Mammary epithelial cell (primary cell): ENCODE measurements at regions of chr3 and their contacts with region 1.

Region 1: DNA sequence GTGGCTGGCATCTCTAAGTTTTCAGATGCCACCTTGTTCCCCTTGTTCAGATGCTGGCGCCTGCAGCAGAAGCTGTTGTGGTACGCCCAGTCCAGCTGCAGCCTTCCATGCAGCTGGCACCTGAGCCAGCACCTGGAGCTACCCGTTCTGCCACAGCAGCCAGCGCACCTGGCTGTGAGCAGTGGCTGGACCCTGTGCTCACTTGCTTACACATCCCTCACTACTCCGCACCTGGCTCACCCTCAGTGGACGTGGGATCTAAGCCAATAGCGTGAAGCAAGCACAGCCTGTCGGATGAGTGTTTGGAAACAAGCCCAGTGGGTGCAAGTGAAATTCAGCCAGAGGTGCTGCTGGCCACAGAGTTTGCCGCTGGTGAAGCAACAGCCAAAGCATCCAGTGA is 607.5 kb upstream of the BCHE start:
- DNase-seq: peak; percentile 94
- H3K4me3 ChIP-seq: peak overlapping the region in 2 of 3 experiments; percentile 6 to 8
- H3K27ac ChIP-seq: peak overlapping the region; percentile 62
- H3K4me1 ChIP-seq: peaks cover 34% of the 10 kb centered on the region
- H3K27me3 ChIP-seq: no peaks in the 10 kb centered on the region
- CTCF ChIP-seq: no peak

Region 2: GRCh38 chr3:166085164-166085821 is 359.5 kb before region 1 on chr3:
- CTCF ChIA-PET with region 1: no interaction called
- dilution Hi-C with region 1: no loop called
- in situ Hi-C with region 1: no loop called
- intact Hi-C with region 1: loop called (anchors 10 kb)
- DNase-seq: peak; percentile 81
- H3K4me3 ChIP-seq: no peak overlapping the region
- H3K27ac ChIP-seq: no peak overlapping the region
- H3K4me1 ChIP-seq: peaks cover 8% of the 10 kb centered on the region
- H3K27me3 ChIP-seq: no peaks in the 10 kb centered on the region
- CTCF ChIP-seq: no peak

Region 3: DNA sequence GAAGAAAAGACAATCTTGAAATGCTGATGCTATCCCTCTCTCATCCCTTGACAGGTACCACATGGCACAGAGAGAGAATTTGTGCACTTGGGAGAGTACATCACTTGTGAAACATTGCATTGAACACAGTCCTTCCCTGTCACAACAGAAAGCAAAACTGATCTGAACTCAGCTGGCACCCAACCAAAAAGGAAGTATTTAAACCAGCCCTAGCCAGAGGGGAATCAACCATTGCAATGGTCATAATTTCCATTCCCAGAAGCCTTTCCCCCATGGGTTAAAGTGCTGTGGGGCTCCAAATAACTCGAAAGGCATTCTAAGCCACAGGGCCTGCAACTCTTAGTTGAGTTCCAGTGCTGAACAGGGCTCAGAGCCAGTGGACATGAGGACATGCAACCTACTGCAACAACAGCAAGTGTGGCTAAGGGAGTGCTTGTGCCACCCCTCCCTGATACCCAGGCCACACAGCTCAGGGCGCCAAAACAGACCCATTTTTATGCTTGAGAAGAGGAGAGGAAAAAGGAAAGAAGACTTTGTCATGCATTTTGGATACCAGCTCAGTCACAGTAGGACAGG is 76.7 kb before region 1 on chr3:
- CTCF ChIA-PET with region 1: no interaction called
- dilution Hi-C with region 1: no loop called
- in situ Hi-C with region 1: no loop called
- intact Hi-C with region 1: no loop called
- DNase-seq: no peak
- H3K4me3 ChIP-seq: no peak overlapping the region
- H3K27ac ChIP-seq: no peak overlapping the region
- H3K4me1 ChIP-seq: no peaks in the 10 kb centered on the region
- H3K27me3 ChIP-seq: no peaks in the 10 kb centered on the region
- CTCF ChIP-seq: no peak

Region 4: DNA sequence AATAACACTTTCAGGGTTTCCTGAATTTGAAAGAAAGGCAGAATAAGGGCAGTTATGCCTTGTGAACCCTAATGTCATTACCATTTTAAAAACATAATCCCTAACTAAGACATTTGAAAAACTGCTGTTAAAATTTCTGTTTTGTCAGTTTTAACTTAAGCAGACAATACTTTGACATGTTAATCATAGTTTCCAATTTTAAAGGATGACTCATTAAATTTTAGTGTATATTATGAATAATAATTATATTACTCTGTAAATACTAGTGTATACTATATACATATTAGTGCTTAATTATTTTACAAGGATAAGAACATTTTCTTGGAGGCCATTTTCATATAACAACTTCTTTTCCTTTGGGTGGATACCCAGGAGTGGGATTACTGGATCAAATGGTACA is 54.5 kb before region 1 on chr3:
- CTCF ChIA-PET with region 1: interaction called, 16 read pairs
- dilution Hi-C with region 1: no loop called
- in situ Hi-C with region 1: no loop called
- intact Hi-C with region 1: no loop called
- DNase-seq: no peak
- H3K4me3 ChIP-seq: no peak overlapping the region
- H3K27ac ChIP-seq: no peak overlapping the region
- H3K4me1 ChIP-seq: no peaks in the 10 kb centered on the region
- H3K27me3 ChIP-seq: no peaks in the 10 kb centered on the region
- CTCF ChIP-seq: no peak